ENCODE measurements at regions of chr17 and their contacts with region 1.

Region 1: DNA sequence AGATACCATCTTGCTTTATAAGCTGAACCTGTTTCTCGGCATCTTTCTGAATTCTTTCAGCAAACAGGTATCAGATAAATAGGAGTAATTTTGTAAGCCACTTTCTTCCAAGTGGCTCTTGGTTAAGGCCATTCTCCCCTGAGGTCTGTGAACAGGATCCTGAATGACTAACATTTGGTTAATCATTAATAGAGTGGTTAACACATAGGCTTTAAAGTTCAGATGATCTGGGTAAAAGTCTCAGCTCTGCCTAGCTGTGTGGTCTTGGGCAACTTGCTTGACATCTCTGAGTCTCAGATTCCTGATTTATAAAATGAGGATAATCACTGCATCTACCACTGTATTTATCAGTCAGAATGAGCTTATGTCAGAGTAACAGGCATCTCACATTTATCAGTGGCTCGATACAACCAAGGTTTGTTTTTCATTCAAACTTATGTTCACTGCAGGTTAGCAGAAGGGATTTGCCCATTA is 44.4 kb upstream of the ANKFN1 start:
- DNase-seq: no peak
- H3K4me3 ChIP-seq: no peak overlapping the region
- H3K27ac ChIP-seq: no peak overlapping the region
- H3K4me1 ChIP-seq: no peaks in the 10 kb centered on the region
- H3K27me3 ChIP-seq: no peaks in the 10 kb centered on the region
- CTCF ChIP-seq: no peak

Region 2: DNA sequence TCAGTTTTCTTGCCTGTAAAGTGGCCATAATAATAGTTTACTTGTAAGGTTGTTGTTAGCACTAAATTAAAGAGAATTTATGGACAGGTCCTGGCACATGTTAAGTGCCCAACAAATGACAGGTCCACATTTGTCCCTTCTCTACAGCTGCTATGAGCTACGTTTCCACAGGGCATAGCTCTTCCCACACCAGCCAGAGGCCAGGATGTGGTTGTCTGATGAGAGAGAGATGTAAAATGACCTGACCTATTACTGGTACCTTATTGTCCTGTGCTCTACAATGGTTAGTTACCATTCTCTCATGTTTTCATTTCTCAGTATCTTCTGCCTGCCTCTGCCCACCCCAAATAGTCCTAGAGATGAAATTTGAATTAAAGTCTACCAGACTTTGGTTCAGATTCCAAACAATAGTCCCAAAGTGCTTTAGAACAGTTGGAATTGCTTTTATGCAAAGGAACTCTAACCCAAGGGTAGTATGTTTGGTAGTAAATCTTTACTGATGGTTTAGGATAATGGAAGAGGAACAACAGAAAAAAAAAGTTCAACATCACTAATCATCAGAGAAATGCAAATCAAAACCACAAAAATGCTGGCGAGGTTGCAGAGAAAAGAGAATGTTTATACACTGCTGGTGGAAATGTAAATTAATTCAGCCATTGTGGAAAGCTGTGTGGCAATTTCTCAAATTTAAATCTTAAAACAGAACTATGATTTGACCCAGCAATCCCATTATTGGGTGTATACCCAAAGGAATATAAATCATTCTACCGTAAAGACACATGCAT is 12.6 kb before region 1 on chr17:
- CTCF ChIA-PET with region 1: no interaction called
- dilution Hi-C with region 1: no loop called
- in situ Hi-C with region 1: no loop called
- intact Hi-C with region 1: no loop called
- DNase-seq: no peak
- H3K4me3 ChIP-seq: no peak overlapping the region
- H3K27ac ChIP-seq: no peak overlapping the region
- H3K4me1 ChIP-seq: no peaks in the 10 kb centered on the region
- H3K27me3 ChIP-seq: no peaks in the 10 kb centered on the region
- CTCF ChIP-seq: no peak

Region 3: GRCh38 chr17:56451629-56452028 is 342.8 kb after region 1 on chr17:
- CTCF ChIA-PET with region 1: no interaction called
- dilution Hi-C with region 1: no loop called
- in situ Hi-C with region 1: loop called in 1 of 2 experiments (anchors 25 kb)
- intact Hi-C with region 1: no loop called
- DNase-seq: peak; percentile 4
- H3K4me3 ChIP-seq: no peak overlapping the region
- H3K27ac ChIP-seq: no peak overlapping the region
- H3K4me1 ChIP-seq: no peaks in the 10 kb centered on the region
- H3K27me3 ChIP-seq: no peaks in the 10 kb centered on the region
- CTCF ChIP-seq: no peak

Measured in mammary epithelial cell (primary cell).